ENCODE measurements at regions of chr11 and their contacts with region 1.

Region 1: GRCh38 chr11:111878849-111879636 is at the starts of genes CFAP68 and FDXACB1:
- DNase-seq: peak; percentile 99
- H3K4me3 ChIP-seq: peak within 1 kb of the TSS; percentile 61 to 77 (median 64)
- H3K27ac ChIP-seq: peak within 1 kb of the TSS; percentile 82 to 96 (median 94)
- H3K4me1 ChIP-seq: peaks cover 11 to 24% (median 18%) of the 10 kb centered on the region in 4 donors
- H3K27me3 ChIP-seq: no peaks in the 10 kb centered on the region
- CTCF ChIP-seq: peak in 2 of 3 experiments; percentile 98 to 99
- EP300 ChIP-seq: peak; percentile 90
- POLR2A ChIP-seq: peak; percentile 65
- total RNA-seq, gene CFAP68: 8.7 to 21.7 (median 19.9) TPM
- total RNA-seq, gene FDXACB1: 0.83 to 0.92 (median 0.84) TPM

Region 2: GRCh38 chr11:111707039-111707690 is 171.9 kb before region 1 on chr11:
- intact Hi-C with region 1: no loop called
- DNase-seq: no peak
- H3K4me3 ChIP-seq: peak overlapping the region in 1 of 4 donors; percentile 12
- H3K27ac ChIP-seq: peak overlapping the region; percentile 43 to 64 (median 54)
- H3K4me1 ChIP-seq: peaks cover 12 to 22% (median 20%) of the 10 kb centered on the region in 4 donors
- H3K27me3 ChIP-seq: no peaks in the 10 kb centered on the region
- CTCF ChIP-seq: no peak
- EP300 ChIP-seq: no peak
- POLR2A ChIP-seq: no peak

Region 3: DNA sequence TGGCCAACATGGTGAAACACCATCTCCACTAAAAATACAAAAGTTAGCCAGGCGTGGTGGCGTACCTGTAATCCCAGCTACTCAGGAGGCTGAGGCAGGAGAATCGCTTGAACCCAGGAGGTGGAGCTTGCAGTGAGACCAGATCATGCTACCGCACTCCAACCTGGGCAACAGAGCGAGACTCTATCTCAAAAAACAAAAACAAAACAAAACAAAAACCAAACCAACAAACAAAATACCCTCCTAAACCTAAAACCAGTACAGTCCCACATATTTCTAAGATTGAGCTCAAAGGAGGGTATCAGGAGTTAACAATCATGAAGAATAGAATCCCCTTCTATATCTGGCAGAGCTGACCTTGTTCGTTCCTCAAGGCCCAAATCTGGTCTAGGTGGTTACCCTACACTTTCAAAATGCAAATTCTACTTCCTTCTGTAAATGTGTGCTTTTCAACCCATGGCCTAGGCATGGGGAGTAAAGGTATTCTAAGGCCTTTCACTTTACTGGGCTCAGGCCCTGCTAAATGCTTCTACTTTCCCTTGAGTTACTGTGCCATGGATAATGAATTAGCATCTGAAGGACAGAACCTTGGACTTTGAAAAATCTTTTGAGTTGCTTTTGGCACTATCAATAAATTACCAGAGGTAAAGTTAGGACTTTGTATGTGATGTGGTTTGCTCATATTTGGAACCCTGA is 102.5 kb before region 1 on chr11:
- intact Hi-C with region 1: no loop called
- DNase-seq: no peak
- H3K4me3 ChIP-seq: no peak overlapping the region
- H3K27ac ChIP-seq: peak overlapping the region in 1 of 4 donors; percentile 13
- H3K4me1 ChIP-seq: peaks cover 6 to 14% (median 10%) of the 10 kb centered on the region in 4 donors
- H3K27me3 ChIP-seq: no peaks in the 10 kb centered on the region
- CTCF ChIP-seq: no peak
- EP300 ChIP-seq: no peak
- POLR2A ChIP-seq: no peak

Region 4: DNA sequence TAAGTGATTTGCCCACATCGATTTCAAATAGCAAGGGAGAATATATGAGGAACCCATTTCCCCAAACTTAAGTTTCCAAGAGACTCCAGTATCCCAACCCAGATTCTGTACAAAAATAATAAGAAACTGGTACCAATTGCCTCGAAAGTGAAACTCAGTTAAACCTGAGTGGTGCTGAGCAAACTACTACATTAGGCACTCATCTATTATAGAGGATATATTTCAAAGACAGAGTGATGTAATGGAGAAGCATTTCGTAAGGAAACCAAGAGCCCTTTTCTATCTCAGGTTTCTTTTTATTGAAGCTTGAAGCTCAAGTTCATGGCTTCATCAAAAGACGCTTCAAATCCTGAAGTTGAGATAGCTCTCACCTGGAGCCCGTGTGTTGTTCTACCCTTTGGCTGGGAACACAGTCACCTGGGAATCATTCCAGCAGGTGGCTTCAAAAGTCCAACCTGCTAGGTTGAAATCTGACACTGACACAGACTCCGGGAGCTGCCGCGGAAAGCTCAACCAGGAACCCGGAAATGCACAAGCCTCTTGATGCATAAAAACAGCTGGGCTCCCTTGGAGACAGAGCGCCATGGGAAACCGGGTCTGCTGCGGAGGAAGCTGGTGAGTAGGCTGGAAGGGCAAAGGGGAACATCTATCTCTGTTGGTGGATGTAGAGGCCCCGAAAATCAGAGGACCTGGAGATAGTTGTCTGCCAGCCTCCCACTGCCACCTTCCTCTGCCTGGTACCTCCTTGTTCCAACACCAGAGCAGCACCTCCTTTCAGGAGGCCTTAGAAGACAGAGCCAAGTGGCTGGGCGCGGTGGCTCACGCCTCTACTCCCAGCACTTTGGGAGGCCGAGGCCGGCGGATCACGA is 39.6 kb after region 1 on chr11 and contains the start of gene C11orf52:
- intact Hi-C with region 1: no loop called
- DNase-seq: peak; percentile 84
- H3K4me3 ChIP-seq: peak within 1 kb of the TSS in 3 of 4 donors; percentile 4 to 9 (median 9)
- H3K27ac ChIP-seq: peak within 1 kb of the TSS in 3 of 4 donors; percentile 16 to 41 (median 29)
- H3K4me1 ChIP-seq: peaks cover 36 to 47% (median 42%) of the 10 kb centered on the region in 4 donors
- H3K27me3 ChIP-seq: no peaks in the 10 kb centered on the region
- CTCF ChIP-seq: no peak
- EP300 ChIP-seq: no peak
- POLR2A ChIP-seq: no peak
- total RNA-seq, gene C11orf52: 1.8 to 6.9 (median 2.9) TPM

Region 5: DNA sequence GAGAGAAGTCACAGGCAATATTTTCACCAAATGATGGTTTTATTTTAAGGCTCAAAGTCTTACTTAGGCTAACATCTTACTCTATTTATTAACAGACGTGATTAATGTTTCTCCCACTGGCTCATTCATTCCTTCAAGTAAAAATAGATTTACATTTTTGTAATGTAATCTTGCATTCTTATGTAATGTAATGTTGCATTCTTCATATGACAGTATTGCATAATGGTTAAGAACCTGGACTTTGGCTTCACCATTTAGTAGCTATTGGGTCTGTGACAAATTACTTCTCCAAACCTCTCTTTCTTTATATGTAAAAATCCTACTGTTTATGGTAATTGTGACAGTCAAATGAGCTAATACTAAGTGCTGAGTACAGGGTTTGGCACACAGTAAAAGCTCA is 54.8 kb after region 1 on chr11:
- intact Hi-C with region 1: loop called (anchors 2 kb)
- DNase-seq: no peak
- H3K4me3 ChIP-seq: no peak overlapping the region
- H3K27ac ChIP-seq: peak overlapping the region in 2 of 4 donors; percentile 81 to 91
- H3K4me1 ChIP-seq: peaks cover 26 to 62% (median 57%) of the 10 kb centered on the region in 4 donors
- H3K27me3 ChIP-seq: no peaks in the 10 kb centered on the region
- CTCF ChIP-seq: no peak
- EP300 ChIP-seq: no peak
- POLR2A ChIP-seq: no peak

Region 6: GRCh38 chr11:111982019-111982464 is 103.0 kb after region 1 on chr11:
- intact Hi-C with region 1: loop called (anchors 2 kb)
- DNase-seq: no peak
- H3K4me3 ChIP-seq: no peak overlapping the region
- H3K27ac ChIP-seq: peak overlapping the region; percentile 78 to 99 (median 97)
- H3K4me1 ChIP-seq: peaks cover 27 to 61% (median 57%) of the 10 kb centered on the region in 4 donors
- H3K27me3 ChIP-seq: no peaks in the 10 kb centered on the region
- CTCF ChIP-seq: peak; percentile 65 to 78 (median 76)
- EP300 ChIP-seq: no peak
- POLR2A ChIP-seq: no peak

Region 7: GRCh38 chr11:112086422-112087191 is 207.6 kb after region 1 on chr11 and contains the starts of genes SDHD and TIMM8B:
- intact Hi-C with region 1: loop called (anchors 10 kb)
- DNase-seq: peak; percentile 98
- H3K4me3 ChIP-seq: peak within 1 kb of the TSS; percentile 66 to 95 (median 76)
- H3K27ac ChIP-seq: peak within 1 kb of the TSS; percentile 79 to 84 (median 83)
- H3K4me1 ChIP-seq: peaks cover 41 to 47% (median 43%) of the 10 kb centered on the region in 4 donors
- H3K27me3 ChIP-seq: no peaks in the 10 kb centered on the region
- CTCF ChIP-seq: peak; percentile 12 to 37 (median 31)
- EP300 ChIP-seq: no peak
- POLR2A ChIP-seq: peak; percentile 56
- total RNA-seq, gene SDHD: 112 to 148 (median 128) TPM
- total RNA-seq, gene TIMM8B: 27.8 to 57.7 (median 30.9) TPM

Measured in esophagus muscularis mucosa (tissue), 4 donors.